ENCODE measurements at regions of chr6 and their contacts with region 1.

Region 1: GRCh38 chr6:10694302-10695085 is at the starts of genes C6orf52 and PAK1IP1:
- DNase-seq: peak; percentile 83 to 97 (median 94)
- ATAC-seq: peak; percentile 91
- H3K4me3 ChIP-seq: peak within 1 kb of the TSS; percentile 90 to 97
- H3K4me3 Mint-ChIP-seq: peak within 1 kb of the TSS; percentile 98
- H3K27ac ChIP-seq: peak within 1 kb of the TSS; percentile 97 to 99
- H3K27ac Mint-ChIP-seq: peak within 1 kb of the TSS; percentile 100
- H3K4me1 ChIP-seq: peaks cover 23% of the 10 kb centered on the region
- H3K4me1 Mint-ChIP-seq: peaks cover 46% of the 10 kb centered on the region
- H3K27me3 ChIP-seq: no peaks in the 10 kb centered on the region
- H3K27me3 Mint-ChIP-seq: no peaks in the 10 kb centered on the region
- CTCF ChIP-seq: no peak
- total RNA-seq, gene C6orf52: not detected
- total RNA-seq, gene PAK1IP1: 6.5 to 6.8 TPM

Region 2: DNA sequence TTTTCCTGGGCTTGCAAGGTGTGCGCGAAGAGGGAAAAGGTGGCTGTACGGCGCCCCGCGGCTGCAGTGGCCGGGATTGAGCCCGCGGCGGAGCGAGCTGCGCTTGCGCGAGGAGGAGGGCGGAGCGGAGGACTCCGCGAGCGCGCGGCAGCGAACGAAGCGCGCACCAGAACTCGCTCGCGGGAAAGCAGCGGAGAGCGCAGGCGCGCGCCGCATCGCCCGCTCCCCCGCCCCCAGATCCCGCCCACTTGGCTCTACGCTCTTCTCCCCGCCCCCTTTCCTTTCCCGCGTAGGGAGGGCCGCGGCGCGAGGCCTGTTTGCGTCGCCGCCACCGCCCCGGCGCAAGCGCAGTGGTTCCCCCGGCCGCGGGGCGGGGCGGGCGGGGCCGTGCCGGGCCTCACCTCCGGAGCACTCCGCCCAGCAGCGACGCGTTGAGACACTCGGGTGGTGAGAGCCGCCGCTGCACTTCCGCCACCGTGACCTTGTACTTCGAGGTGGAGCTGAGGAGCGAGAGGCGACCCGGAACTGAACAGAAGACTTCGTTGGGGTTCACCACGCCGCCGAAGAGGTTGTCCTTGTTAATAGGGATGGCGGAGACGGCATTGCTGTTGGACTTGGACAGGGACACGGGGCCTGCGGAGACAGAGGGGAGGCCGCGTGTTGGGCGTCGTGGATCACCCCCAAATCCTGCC is 290.2 kb before region 1 on chr6:
- CTCF ChIA-PET with region 1: no interaction called
- POLR2A ChIA-PET with region 1: no interaction called
- intact Hi-C with region 1: loop called (anchors 1 to 2 kb)
- DNase-seq: peak; percentile 50 to 91 (median 77)
- ATAC-seq: peak; percentile 87
- H3K4me3 ChIP-seq: peak overlapping the region; percentile 55 to 71
- H3K4me3 Mint-ChIP-seq: peak overlapping the region; percentile 73
- H3K27ac ChIP-seq: peak overlapping the region in 1 of 2 experiments; percentile 56
- H3K27ac Mint-ChIP-seq: peak overlapping the region; percentile 75
- H3K4me1 ChIP-seq: peaks cover 13% of the 10 kb centered on the region
- H3K4me1 Mint-ChIP-seq: peaks cover 15% of the 10 kb centered on the region
- H3K27me3 ChIP-seq: peaks cover 5 to 11% of the 10 kb centered on the region in 2 experiments
- H3K27me3 Mint-ChIP-seq: peaks cover 47% of the 10 kb centered on the region
- CTCF ChIP-seq: no peak

Region 3: DNA sequence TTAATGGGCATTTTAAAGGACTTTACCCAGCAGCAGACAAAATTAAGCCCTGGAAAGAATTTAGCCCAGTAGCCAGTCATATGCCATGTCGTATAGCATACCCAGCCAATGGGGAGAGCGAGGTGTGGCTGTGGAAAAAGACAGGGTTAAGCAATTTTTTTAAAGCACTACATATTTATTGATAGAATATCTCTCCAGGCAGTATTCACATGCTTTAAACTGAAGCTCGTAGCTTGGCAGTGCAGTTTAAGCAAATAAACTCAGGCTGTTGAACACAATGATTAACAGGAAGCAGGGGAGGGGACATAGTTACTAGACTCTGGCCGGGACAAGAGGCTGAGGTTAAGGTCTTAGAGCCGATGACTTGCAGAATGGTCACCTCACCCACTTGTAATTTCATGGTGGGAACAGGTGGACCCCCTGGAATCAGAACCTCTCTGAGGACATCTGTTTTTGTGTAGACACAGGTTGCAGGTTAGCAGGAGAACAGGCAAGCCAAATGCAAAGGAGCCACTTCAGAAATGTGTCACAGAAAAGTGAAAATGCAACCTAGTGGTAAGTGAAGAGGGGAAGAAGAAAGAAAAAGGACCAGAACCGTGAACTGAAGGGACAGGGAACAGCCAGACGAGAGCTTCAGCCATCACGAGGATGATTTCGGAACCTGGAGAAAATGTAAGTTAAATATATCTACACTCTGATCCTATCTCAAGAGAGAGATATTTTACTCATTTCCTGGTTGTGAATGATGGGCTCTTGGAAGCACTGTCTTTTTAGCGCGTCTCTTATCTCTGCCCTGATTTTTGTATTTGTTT is 166.1 kb before region 1 on chr6:
- CTCF ChIA-PET with region 1: no interaction called
- POLR2A ChIA-PET with region 1: interaction called, 6 read pairs
- intact Hi-C with region 1: loop called in 1 of 2 experiments (anchors 2 kb)
- DNase-seq: peak in 5 of 9 experiments; percentile 10 to 56 (median 23)
- ATAC-seq: peak; percentile 57
- H3K4me3 ChIP-seq: peak overlapping the region; percentile 59 to 61
- H3K4me3 Mint-ChIP-seq: peak overlapping the region; percentile 87
- H3K27ac ChIP-seq: peak overlapping the region; percentile 40 to 51
- H3K27ac Mint-ChIP-seq: peak overlapping the region; percentile 76
- H3K4me1 ChIP-seq: peaks cover 33% of the 10 kb centered on the region
- H3K4me1 Mint-ChIP-seq: peaks cover 47% of the 10 kb centered on the region
- H3K27me3 ChIP-seq: no peaks in the 10 kb centered on the region
- H3K27me3 Mint-ChIP-seq: peaks cover 4% of the 10 kb centered on the region
- CTCF ChIP-seq: no peak

Region 4: DNA sequence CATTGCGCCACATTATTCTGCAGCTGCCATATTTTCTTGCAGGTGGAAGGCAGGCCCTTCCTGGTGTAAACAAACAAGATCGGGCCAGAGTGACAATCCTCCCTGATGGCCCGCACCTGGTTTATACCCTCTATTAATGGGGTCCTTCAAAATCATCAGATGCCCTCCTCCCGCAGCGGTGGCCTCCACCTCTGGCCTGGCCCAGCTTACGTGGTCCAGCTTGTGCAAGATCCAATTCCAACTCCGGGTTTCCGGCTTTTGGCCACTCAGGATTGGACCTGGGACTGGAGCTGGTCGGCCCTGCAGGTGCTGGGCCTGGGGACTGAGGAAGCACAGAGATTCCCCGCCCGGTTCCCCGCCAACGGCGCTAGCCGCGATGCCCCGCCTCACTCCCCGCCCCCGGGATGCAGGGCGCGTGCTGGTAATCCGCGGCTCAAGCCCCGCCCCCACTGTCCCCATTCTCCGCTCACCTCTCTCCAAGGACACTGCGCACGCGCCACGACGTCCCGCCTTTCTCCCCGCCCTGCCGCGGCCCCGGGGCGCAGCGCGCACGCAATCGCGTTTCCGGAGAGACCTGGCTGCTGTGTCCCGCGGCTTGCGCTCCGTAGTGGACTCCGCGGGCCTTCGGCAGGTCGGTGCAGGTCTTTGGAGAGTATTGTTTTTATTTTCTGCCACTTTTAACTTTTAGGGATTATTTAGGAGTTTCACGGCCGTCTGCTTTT is 52.9 kb after region 1 on chr6 and contains the start of gene TMEM14B:
- CTCF ChIA-PET with region 1: no interaction called
- POLR2A ChIA-PET with region 1: interaction called, 25 read pairs
- intact Hi-C with region 1: loop called (anchors 1 kb)
- DNase-seq: peak; percentile 98 to 100 (median 99)
- ATAC-seq: peak; percentile 98
- H3K4me3 ChIP-seq: peak within 1 kb of the TSS; percentile 73 to 79
- H3K4me3 Mint-ChIP-seq: peak within 1 kb of the TSS; percentile 96
- H3K27ac ChIP-seq: peak within 1 kb of the TSS; percentile 77 to 79
- H3K27ac Mint-ChIP-seq: peak within 1 kb of the TSS; percentile 97
- H3K4me1 ChIP-seq: peaks cover 33% of the 10 kb centered on the region
- H3K4me1 Mint-ChIP-seq: peaks cover 57% of the 10 kb centered on the region
- H3K27me3 ChIP-seq: no peaks in the 10 kb centered on the region
- H3K27me3 Mint-ChIP-seq: no peaks in the 10 kb centered on the region
- CTCF ChIP-seq: no peak
- total RNA-seq, gene TMEM14B: 36.5 to 41.2 TPM

Region 5: GRCh38 chr6:10809098-10809497 is 114.6 kb after region 1 on chr6:
- CTCF ChIA-PET with region 1: no interaction called
- POLR2A ChIA-PET with region 1: no interaction called
- intact Hi-C with region 1: no loop called
- DNase-seq: no peak
- ATAC-seq: no peak
- H3K4me3 ChIP-seq: no peak overlapping the region
- H3K4me3 Mint-ChIP-seq: no peak overlapping the region
- H3K27ac ChIP-seq: no peak overlapping the region
- H3K27ac Mint-ChIP-seq: no peak overlapping the region
- H3K4me1 ChIP-seq: no peaks in the 10 kb centered on the region
- H3K4me1 Mint-ChIP-seq: no peaks in the 10 kb centered on the region
- H3K27me3 ChIP-seq: no peaks in the 10 kb centered on the region
- H3K27me3 Mint-ChIP-seq: no peaks in the 10 kb centered on the region
- CTCF ChIP-seq: no peak

Region 6: DNA sequence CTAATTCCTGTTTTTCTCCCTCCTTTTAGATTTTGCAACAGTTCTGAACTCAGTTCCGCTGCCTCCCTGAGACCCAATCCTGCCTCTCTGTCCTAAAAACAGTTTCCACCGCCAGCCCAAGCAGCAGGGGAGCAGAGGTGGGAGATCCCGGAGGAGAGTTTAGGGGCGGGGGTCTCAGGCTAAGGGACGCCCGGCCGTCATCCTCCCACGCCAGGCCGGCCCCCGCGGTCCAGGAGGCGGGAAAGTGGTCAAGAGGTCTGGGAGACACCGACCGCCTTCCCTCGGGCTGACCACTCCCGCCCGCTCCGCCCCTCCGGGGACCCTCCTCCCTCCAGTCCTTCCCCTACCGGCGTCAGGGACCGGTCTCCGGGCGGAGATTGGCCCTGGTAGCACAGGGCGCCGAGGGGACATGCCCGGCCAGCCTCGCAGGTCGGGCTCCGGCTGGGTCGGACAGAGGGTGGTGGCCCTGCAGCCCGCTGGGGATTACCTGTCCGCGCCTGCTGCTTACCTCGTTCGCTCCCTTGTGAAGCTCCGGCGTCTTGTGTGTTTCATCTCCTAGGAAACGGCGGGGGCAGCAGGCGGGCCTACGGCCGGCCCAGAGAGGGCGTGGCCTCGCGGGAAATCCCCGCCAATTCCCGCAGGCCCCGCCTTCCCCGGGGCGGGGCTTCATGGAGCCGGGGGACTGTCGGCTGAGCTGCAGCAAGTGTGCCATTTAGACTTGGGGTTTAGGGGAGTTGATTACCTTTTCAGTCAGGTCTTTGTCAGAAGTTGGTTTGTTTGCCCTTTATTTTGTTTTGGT is 143.7 kb after region 1 on chr6 and contains the start of gene MAK:
- CTCF ChIA-PET with region 1: no interaction called
- POLR2A ChIA-PET with region 1: no interaction called
- intact Hi-C with region 1: loop called in 1 of 2 experiments (anchors 1 kb)
- DNase-seq: peak; percentile 74 to 94 (median 83)
- ATAC-seq: peak; percentile 96
- H3K4me3 ChIP-seq: peak within 1 kb of the TSS; percentile 53 to 56
- H3K4me3 Mint-ChIP-seq: peak within 1 kb of the TSS; percentile 73
- H3K27ac ChIP-seq: peak within 1 kb of the TSS in 1 of 2 experiments; percentile 30
- H3K27ac Mint-ChIP-seq: no peak within 1 kb of the TSS
- H3K4me1 ChIP-seq: peaks cover 22% of the 10 kb centered on the region
- H3K4me1 Mint-ChIP-seq: peaks cover 20% of the 10 kb centered on the region
- H3K27me3 ChIP-seq: peaks cover 11 to 25% of the 10 kb centered on the region in 2 experiments
- H3K27me3 Mint-ChIP-seq: peaks cover 55% of the 10 kb centered on the region
- CTCF ChIP-seq: no peak
- total RNA-seq, gene MAK: 0.62 to 0.89 TPM

Region 7: GRCh38 chr6:11232193-11232769 is 537.8 kb after region 1 on chr6 and contains the start of gene NEDD9:
- CTCF ChIA-PET with region 1: no interaction called
- POLR2A ChIA-PET with region 1: no interaction called
- intact Hi-C with region 1: loop called in 1 of 2 experiments (anchors 10 kb)
- DNase-seq: peak; percentile 87 to 97 (median 91)
- ATAC-seq: peak; percentile 94
- H3K4me3 ChIP-seq: peak within 1 kb of the TSS; percentile 62 to 70
- H3K4me3 Mint-ChIP-seq: peak within 1 kb of the TSS; percentile 94
- H3K27ac ChIP-seq: peak within 1 kb of the TSS; percentile 76 to 96
- H3K27ac Mint-ChIP-seq: peak within 1 kb of the TSS; percentile 99
- H3K4me1 ChIP-seq: peaks cover 25% of the 10 kb centered on the region
- H3K4me1 Mint-ChIP-seq: peaks cover 61% of the 10 kb centered on the region
- H3K27me3 ChIP-seq: no peaks in the 10 kb centered on the region
- H3K27me3 Mint-ChIP-seq: no peaks in the 10 kb centered on the region
- CTCF ChIP-seq: no peak
- total RNA-seq, gene NEDD9: 41.2 to 44.2 TPM

Region 8: GRCh38 chr6:12011276-12012076 is 1317.0 kb after region 1 on chr6:
- CTCF ChIA-PET with region 1: no interaction called
- POLR2A ChIA-PET with region 1: no interaction called
- intact Hi-C with region 1: loop called in 1 of 2 experiments (anchors 2 kb)
- DNase-seq: peak; percentile 92 to 99 (median 96)
- ATAC-seq: peak; percentile 71
- H3K4me3 ChIP-seq: peak overlapping the region in 1 of 2 experiments; percentile 73
- H3K4me3 Mint-ChIP-seq: peak overlapping the region; percentile 91
- H3K27ac ChIP-seq: peak overlapping the region in 1 of 2 experiments; percentile 93
- H3K27ac Mint-ChIP-seq: peak overlapping the region; percentile 94
- H3K4me1 ChIP-seq: peaks cover 28% of the 10 kb centered on the region
- H3K4me1 Mint-ChIP-seq: peaks cover 60% of the 10 kb centered on the region
- H3K27me3 ChIP-seq: no peaks in the 10 kb centered on the region
- H3K27me3 Mint-ChIP-seq: no peaks in the 10 kb centered on the region
- CTCF ChIP-seq: no peak

Measured in CD8-positive, alpha-beta T cell (primary cell).